Mammary epithelial cell (primary cell): ENCODE measurements at regions of chr1 and their contacts with region 1.

Region 1: GRCh38 chr1:93275634-93276295 is 69.9 kb upstream of the DR1 start:
- DNase-seq: peak; percentile 6
- H3K4me3 ChIP-seq: no peak overlapping the region
- H3K27ac ChIP-seq: no peak overlapping the region
- H3K4me1 ChIP-seq: no peaks in the 10 kb centered on the region
- H3K27me3 ChIP-seq: no peaks in the 10 kb centered on the region
- CTCF ChIP-seq: no peak

Region 2: GRCh38 chr1:92886886-92887419 is 388.8 kb before region 1 on chr1:
- CTCF ChIA-PET with region 1: no interaction called
- dilution Hi-C with region 1: no loop called
- in situ Hi-C with region 1: no loop called
- intact Hi-C with region 1: no loop called
- DNase-seq: no peak
- H3K4me3 ChIP-seq: no peak overlapping the region
- H3K27ac ChIP-seq: no peak overlapping the region
- H3K4me1 ChIP-seq: peaks cover 6% of the 10 kb centered on the region
- H3K27me3 ChIP-seq: no peaks in the 10 kb centered on the region
- CTCF ChIP-seq: no peak

Region 3: GRCh38 chr1:93362237-93362636 is 86.5 kb after region 1 on chr1:
- CTCF ChIA-PET with region 1: no interaction called
- dilution Hi-C with region 1: loop called (anchors 5 kb)
- in situ Hi-C with region 1: no loop called
- intact Hi-C with region 1: no loop called
- DNase-seq: no peak
- H3K4me3 ChIP-seq: no peak overlapping the region
- H3K27ac ChIP-seq: no peak overlapping the region
- H3K4me1 ChIP-seq: no peaks in the 10 kb centered on the region
- H3K27me3 ChIP-seq: no peaks in the 10 kb centered on the region
- CTCF ChIP-seq: no peak